ENCODE measurements at regions of chr6 and their contacts with region 1.

Region 1: DNA sequence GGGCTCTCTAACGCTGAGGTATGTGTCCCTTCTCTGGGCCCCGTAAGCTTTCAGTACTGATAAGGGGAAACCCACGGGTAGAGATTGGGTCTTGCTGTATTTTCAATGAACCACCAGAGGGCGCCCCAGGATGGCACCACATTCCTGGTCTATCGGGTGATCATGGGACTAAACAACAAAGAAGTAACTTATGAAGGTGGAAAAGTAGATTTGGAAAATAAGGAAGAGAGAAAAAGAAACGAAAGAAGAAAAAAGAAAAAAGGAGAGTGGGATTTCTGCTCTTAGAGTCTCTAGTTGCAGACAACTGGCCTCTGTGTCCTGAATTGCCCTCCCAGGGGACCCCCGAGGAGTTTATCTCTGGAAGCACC is 93.8 kb downstream of the GMPR start:
- DNase-seq: peak; percentile 53
- H3K4me3 ChIP-seq: no peak overlapping the region
- H3K27ac ChIP-seq: no peak overlapping the region
- H3K4me1 ChIP-seq: peaks cover 52% of the 10 kb centered on the region
- H3K27me3 ChIP-seq: no peaks in the 10 kb centered on the region
- CTCF ChIP-seq: peak; percentile 80 to 95

Region 2: DNA sequence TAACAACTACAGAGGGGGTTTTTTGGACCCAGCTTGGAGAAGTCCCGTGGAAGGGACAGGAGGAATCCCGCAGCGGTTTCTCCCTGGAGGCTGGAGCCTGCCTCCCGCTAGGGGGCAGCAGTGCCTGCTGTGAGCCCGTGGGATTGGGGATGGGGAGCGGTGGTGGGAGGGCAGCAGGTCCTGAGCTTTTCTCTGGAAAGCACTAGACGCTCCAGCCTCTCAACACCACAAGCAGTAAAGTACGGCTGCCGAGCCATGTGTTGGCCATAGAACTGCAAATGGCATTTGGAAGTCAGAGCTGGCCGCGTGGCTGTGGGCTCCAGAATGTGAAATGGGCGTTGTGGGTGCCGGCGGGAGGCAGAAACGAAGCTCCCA is 46.0 kb before region 1 on chr6:
- CTCF ChIA-PET with region 1: interaction called, 3 read pairs
- dilution Hi-C with region 1: no loop called
- in situ Hi-C with region 1: no loop called
- intact Hi-C with region 1: loop called (anchors 1 kb)
- DNase-seq: no peak
- H3K4me3 ChIP-seq: no peak overlapping the region
- H3K27ac ChIP-seq: no peak overlapping the region
- H3K4me1 ChIP-seq: no peaks in the 10 kb centered on the region
- H3K27me3 ChIP-seq: no peaks in the 10 kb centered on the region
- CTCF ChIP-seq: peak; percentile 41 to 67

Region 3: DNA sequence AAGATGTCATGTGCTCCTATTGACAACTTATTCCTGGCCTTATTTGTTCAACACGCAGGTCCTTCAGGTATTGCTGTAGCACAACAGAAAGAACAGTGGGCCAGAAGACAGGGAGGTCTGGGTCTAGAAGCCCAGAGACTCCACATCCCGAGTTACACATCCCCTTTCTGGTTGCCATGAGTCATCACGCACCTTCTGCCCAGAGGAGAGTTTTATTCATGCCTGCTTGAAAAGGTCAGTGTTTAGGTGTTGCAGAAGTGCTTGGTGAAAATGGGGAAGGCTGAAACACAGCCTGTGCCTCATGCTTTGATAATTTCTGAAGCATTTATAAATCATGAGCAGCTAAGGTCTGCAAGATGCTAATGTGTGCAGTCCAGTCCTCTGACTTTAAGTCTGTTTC is 162.6 kb after region 1 on chr6:
- CTCF ChIA-PET with region 1: no interaction called
- dilution Hi-C with region 1: no loop called
- in situ Hi-C with region 1: loop called in 1 of 2 experiments (anchors 5 kb)
- intact Hi-C with region 1: loop called (anchors 2 kb)
- DNase-seq: peak; percentile 53
- H3K4me3 ChIP-seq: no peak overlapping the region
- H3K27ac ChIP-seq: no peak overlapping the region
- H3K4me1 ChIP-seq: peaks cover 15% of the 10 kb centered on the region
- H3K27me3 ChIP-seq: no peaks in the 10 kb centered on the region
- CTCF ChIP-seq: no peak

Region 4: DNA sequence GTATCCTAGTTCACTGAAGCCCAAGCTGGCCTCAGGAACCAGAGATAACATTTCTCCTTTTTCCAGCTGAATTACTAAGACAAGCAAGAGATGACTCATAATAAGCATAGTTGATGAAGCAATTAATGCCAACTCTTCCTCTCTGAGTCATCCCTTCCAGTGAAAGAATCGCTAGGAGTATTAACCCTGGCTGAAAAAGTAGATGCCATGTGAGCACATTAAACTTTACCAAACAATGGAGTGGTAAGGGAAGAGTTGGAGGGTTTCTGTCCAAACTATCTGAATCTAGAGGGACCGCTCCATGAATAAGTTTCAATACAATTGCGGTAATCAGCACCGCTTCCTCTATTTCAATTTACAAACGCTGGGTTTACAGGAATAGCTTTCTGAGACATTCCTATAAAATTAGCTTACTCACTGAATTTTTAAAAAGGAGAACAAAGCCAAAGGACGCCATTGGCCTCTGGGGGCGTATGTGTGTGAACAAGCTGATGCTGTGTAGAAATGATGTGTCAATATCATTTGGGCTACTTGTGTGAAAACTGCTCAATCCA is 380.8 kb after region 1 on chr6:
- CTCF ChIA-PET with region 1: no interaction called
- dilution Hi-C with region 1: no loop called
- in situ Hi-C with region 1: no loop called
- intact Hi-C with region 1: loop called (anchors 2 kb)
- DNase-seq: peak; percentile 92
- H3K4me3 ChIP-seq: peak overlapping the region; percentile 21 to 41 (median 30)
- H3K27ac ChIP-seq: peak overlapping the region; percentile 97
- H3K4me1 ChIP-seq: peaks cover 30% of the 10 kb centered on the region
- H3K27me3 ChIP-seq: no peaks in the 10 kb centered on the region
- CTCF ChIP-seq: peak; percentile 37 to 48

Region 5: GRCh38 chr6:16819752-16820151 is 487.6 kb after region 1 on chr6:
- CTCF ChIA-PET with region 1: no interaction called
- dilution Hi-C with region 1: no loop called
- in situ Hi-C with region 1: no loop called
- intact Hi-C with region 1: loop called (anchors 5 kb)
- DNase-seq: no peak
- H3K4me3 ChIP-seq: no peak overlapping the region
- H3K27ac ChIP-seq: no peak overlapping the region
- H3K4me1 ChIP-seq: peaks cover 8% of the 10 kb centered on the region
- H3K27me3 ChIP-seq: no peaks in the 10 kb centered on the region
- CTCF ChIP-seq: peak; percentile 18 to 53

Region 6: GRCh38 chr6:17086469-17086868 is 754.3 kb after region 1 on chr6:
- CTCF ChIA-PET with region 1: no interaction called
- dilution Hi-C with region 1: no loop called
- in situ Hi-C with region 1: no loop called
- intact Hi-C with region 1: loop called (anchors 2 kb)
- DNase-seq: peak; percentile 59
- H3K4me3 ChIP-seq: no peak overlapping the region
- H3K27ac ChIP-seq: no peak overlapping the region
- H3K4me1 ChIP-seq: no peaks in the 10 kb centered on the region
- H3K27me3 ChIP-seq: peaks cover 4% of the 10 kb centered on the region
- CTCF ChIP-seq: peak; percentile 54 to 71

Measured in mammary epithelial cell (primary cell).